Gastrocnemius medialis (tissue), 4 donors: ENCODE measurements at regions of chr11 and their contacts with region 1.

Region 1: GRCh38 chr11:44911029-44911814 is 39.5 kb downstream of the TP53I11 start:
- DNase-seq: peak; percentile 67 to 75
- ATAC-seq: peak; percentile 86 to 94
- H3K4me3 ChIP-seq: no peak overlapping the region
- H3K27ac ChIP-seq: no peak overlapping the region
- H3K4me1 ChIP-seq: peaks cover 0 to 6% of the 10 kb centered on the region in 2 donors
- H3K27me3 ChIP-seq: no peaks in the 10 kb centered on the region
- CTCF ChIP-seq: peak; percentile 52 to 88 (median 80)
- POLR2A ChIP-seq: no peak

Region 2: DNA sequence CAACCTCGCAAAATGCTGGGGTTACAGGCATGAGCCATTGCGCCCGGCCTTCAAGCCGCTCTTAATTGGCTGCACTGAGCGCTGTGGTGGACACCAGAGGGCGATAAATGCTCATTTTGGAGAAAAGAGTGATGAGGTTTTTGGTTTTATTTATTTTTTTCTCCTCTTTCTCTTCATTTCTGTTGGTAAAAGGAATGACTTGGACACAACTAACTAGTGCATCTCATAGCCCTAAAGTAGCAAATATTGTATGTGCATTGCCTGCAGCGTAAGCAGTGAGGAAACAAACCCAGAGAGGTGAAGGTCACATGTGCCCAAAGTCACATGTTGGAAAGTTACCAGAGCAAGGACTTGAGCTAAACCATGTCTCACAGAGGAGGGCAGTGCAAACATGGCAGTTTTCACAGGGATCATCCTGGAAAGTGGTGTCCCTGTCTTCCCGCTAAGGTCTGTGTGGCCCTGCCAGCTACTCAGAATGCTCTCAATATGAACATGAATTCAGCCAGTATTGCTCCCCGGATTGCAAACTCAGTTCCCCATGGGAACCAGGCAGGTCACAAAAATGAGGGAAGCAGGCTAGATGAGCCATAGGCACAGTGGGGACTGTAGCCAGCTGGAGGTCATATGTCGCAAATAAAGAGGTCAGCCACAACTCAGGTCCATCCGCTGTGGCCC is 354.4 kb before region 1 on chr11:
- in situ Hi-C with region 1: loop called in 3 of 4 experiments (anchors 5 to 10 kb)
- intact Hi-C with region 1: loop called (anchors 5 kb)
- DNase-seq: peak; percentile 34 to 43
- ATAC-seq: peak; percentile 79 to 81
- H3K4me3 ChIP-seq: no peak overlapping the region
- H3K27ac ChIP-seq: no peak overlapping the region
- H3K4me1 ChIP-seq: peaks cover 5 to 6% of the 10 kb centered on the region in 2 donors
- H3K27me3 ChIP-seq: no peaks in the 10 kb centered on the region
- CTCF ChIP-seq: peak; percentile 86 to 92 (median 92)
- POLR2A ChIP-seq: no peak

Region 3: DNA sequence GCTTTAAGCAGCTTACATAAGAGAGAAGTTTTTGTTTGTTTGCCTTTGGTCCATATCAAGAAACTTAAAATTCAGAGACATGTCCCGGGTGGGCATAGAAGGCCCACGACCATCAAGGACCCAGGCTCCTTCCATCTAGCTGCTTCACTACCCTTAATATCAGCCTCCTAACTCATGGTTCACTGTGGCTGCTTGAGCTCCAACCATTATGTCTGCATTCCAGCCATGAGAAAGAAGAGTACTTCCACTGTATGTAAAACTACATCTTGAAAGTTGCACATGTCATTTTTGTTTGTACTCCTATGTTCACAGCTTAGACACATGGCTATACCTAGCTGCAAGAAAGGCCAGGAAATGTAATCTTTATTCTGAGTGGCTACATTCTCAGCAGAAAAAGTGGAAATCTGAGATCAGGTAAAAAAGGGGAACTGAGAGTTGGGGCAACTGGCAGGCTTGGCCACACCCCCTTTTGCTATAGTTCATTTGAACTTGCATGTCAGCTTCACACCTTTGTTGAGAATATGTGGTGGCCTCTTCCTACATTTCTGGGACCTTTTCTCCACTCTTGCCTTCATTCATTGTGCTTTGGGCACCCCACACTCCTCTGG is 120.8 kb after region 1 on chr11:
- in situ Hi-C with region 1: no loop called
- intact Hi-C with region 1: no loop called
- DNase-seq: no peak
- ATAC-seq: no peak
- H3K4me3 ChIP-seq: no peak overlapping the region
- H3K27ac ChIP-seq: no peak overlapping the region
- H3K4me1 ChIP-seq: no peaks in the 10 kb centered on the region
- H3K27me3 ChIP-seq: no peaks in the 10 kb centered on the region
- CTCF ChIP-seq: no peak
- POLR2A ChIP-seq: no peak

Region 4: GRCh38 chr11:45339729-45340519 is 428.7 kb after region 1 on chr11:
- in situ Hi-C with region 1: loop called in 1 of 4 experiments (anchors 25 kb)
- intact Hi-C with region 1: no loop called
- DNase-seq: peak; percentile 70 to 86
- ATAC-seq: peak; percentile 96 to 99
- H3K4me3 ChIP-seq: peak overlapping the region; percentile 1 to 34 (median 19)
- H3K27ac ChIP-seq: no peak overlapping the region
- H3K4me1 ChIP-seq: peaks cover 10 to 14% of the 10 kb centered on the region in 2 donors
- H3K27me3 ChIP-seq: peaks cover 0 to 6% (median 0%) of the 10 kb centered on the region in 3 donors
- CTCF ChIP-seq: peak; percentile 86 to 90 (median 87)
- POLR2A ChIP-seq: no peak